Naive thymus-derived CD4-positive, alpha-beta T cell (primary cell): ENCODE measurements at regions of chr2 and their contacts with region 1.

Region 1: DNA sequence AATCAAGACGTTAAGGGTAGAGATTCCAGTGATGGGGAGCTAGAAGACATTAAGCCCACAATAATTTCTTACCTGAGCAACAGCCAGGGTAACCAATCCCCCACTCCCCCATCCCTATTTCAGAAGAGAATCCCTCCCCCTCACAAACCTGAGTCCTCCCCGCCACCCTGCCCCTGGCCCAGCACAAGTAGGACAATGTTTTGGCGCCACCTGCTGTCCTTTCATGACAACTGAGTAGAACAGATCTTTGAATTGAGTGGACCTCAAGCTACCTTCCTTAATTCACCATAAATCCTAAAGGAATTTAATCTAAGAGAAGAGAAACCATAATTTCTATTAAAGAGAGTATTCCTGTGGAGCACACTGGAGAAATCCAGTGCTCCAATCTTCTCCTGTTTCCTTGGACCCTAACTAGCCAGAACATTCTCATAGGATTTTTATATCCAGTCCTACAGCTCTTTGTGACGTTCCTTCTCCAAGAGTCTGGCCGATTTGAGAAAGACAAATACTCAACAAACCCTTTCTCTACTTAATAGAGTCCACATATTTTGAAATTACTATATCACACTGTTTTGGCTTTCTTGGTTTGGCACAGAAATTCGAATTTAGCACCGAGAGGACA is 41.1 kb downstream of the NHEJ1 start:
- DNase-seq: peak; percentile 14 to 50 (median 34)
- ATAC-seq: peak; percentile 66
- H3K4me3 ChIP-seq: no peak overlapping the region
- H3K4me3 Mint-ChIP-seq: no peak overlapping the region
- H3K27ac ChIP-seq: no peak overlapping the region
- H3K27ac Mint-ChIP-seq: no peak overlapping the region
- H3K4me1 ChIP-seq: peaks cover 0 to 7% of the 10 kb centered on the region in 2 donors
- H3K4me1 Mint-ChIP-seq: peaks cover 4 to 22% (median 11%) of the 10 kb centered on the region in 7 donors
- H3K27me3 ChIP-seq: no peaks in the 10 kb centered on the region
- H3K27me3 Mint-ChIP-seq: no peaks in the 10 kb centered on the region

Region 2: GRCh38 chr2:218648088-218648786 is 471.3 kb before region 1 on chr2:
- CTCF ChIA-PET with region 1: no interaction called
- POLR2A ChIA-PET with region 1: no interaction called
- intact Hi-C with region 1: no loop called
- DNase-seq: peak; percentile 15 to 55 (median 46)
- ATAC-seq: peak; percentile 91
- H3K4me3 ChIP-seq: no peak overlapping the region
- H3K4me3 Mint-ChIP-seq: peak overlapping the region in 1 of 10 donors; percentile 7
- H3K27ac ChIP-seq: no peak overlapping the region
- H3K27ac Mint-ChIP-seq: peak overlapping the region in 1 of 9 donors; percentile 35
- H3K4me1 ChIP-seq: peaks cover 0 to 7% of the 10 kb centered on the region in 2 donors
- H3K4me1 Mint-ChIP-seq: peaks cover 0 to 14% (median 12%) of the 10 kb centered on the region in 7 donors
- H3K27me3 ChIP-seq: no peaks in the 10 kb centered on the region
- H3K27me3 Mint-ChIP-seq: no peaks in the 10 kb centered on the region

Region 3: DNA sequence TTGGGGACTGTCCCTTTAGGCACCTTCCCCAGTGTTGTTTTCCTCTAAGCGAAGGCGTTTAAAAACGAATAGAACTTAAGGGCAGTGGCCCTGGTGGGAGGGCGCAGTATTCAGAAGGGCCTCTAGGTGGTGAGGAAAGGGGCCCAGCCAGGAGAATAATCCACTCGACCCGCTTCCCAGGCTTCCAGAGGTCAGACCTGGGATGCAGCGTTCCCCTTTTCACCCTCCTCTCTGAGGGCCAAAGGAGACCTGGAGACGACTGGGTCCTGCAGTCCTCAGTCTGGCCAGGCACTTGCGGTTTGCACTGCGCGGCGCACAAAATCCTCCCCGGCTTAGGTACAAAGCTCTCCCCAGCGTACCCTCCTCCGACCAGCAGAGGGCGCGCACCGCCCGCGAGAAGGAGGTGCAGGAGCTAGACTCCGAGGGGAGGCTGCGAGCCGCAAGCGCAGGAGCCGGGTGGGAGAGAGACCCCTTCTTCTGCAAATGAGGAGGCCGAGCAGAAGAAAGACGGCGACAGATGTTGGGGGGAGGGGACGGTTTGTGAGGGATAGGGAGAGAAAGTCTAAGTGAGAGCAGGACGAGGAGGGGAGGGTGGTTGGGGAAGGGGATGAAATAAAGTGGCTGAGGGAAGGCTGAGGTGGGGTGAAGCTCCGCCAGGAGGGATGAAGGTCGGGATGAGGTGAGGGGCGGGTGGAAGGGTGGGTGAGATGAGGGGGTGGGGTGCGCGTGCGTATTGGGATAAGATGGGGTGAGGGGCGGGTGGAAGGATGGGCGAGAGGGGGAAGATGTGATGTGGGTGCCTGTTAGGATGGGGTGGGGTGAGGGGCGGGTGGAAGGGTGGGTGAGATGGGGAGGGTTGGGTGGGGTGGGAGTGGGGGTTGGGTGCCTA is 139.4 kb before region 1 on chr2:
- CTCF ChIA-PET with region 1: interaction called, 3 read pairs
- POLR2A ChIA-PET with region 1: no interaction called
- intact Hi-C with region 1: loop called in 1 of 2 experiments (anchors 1 kb)
- DNase-seq: peak; percentile 65 to 85 (median 81)
- ATAC-seq: peak; percentile 93
- H3K4me3 ChIP-seq: peak overlapping the region; percentile 53
- H3K4me3 Mint-ChIP-seq: peak overlapping the region; percentile 66 to 94 (median 73)
- H3K27ac ChIP-seq: no peak overlapping the region
- H3K27ac Mint-ChIP-seq: peak overlapping the region in 1 of 9 donors; percentile 58
- H3K4me1 ChIP-seq: peaks cover 13 to 23% of the 10 kb centered on the region in 2 donors
- H3K4me1 Mint-ChIP-seq: peaks cover 14 to 40% (median 20%) of the 10 kb centered on the region in 7 donors
- H3K27me3 ChIP-seq: peaks cover 17 to 35% of the 10 kb centered on the region in 2 donors
- H3K27me3 Mint-ChIP-seq: peaks cover 60 to 80% (median 70%) of the 10 kb centered on the region in 5 donors

Region 4: DNA sequence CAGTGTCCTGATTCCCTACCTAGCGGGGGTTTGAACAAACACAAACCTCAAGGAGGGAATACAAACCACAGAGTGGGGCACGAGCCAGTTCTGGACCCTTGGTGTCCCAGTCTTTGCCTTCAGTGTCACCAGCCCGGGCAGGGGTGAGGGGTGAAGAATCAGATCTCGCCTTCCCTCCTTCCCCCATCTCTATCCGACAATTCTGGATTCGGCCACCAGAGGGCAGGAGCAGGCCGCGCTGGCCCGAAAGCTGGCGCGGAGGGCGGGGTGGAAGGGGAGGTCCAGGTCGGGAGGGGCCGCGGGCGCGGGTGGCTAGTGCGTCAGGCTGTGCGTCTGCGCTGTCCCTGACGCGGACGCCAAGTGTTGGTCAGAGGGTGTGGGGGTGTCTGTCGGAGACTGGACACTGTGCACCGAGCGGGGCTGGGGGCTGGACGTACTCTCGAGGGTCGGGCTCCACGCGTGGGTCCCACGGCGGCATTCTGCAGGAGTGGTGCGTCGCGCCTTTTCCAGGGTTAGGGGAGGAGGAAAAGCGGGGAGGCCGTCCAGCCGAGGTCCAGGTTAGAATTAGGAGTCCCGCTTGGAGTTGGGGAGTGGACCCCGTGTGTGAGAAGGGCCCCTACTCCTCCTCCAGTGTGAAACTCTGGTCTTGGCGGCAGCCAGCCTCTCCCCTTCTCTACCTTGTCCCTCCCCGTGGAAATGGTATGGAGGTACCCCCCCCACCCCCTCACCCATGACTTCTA is 123.4 kb before region 1 on chr2:
- CTCF ChIA-PET with region 1: interaction called, 3 read pairs
- POLR2A ChIA-PET with region 1: no interaction called
- intact Hi-C with region 1: loop called in 1 of 2 experiments (anchors 1 kb)
- DNase-seq: peak; percentile 38 to 85 (median 63)
- ATAC-seq: peak; percentile 90
- H3K4me3 ChIP-seq: no peak overlapping the region
- H3K4me3 Mint-ChIP-seq: peak overlapping the region in 6 of 10 donors; percentile 29 to 66 (median 45)
- H3K27ac ChIP-seq: no peak overlapping the region
- H3K27ac Mint-ChIP-seq: no peak overlapping the region
- H3K4me1 ChIP-seq: peaks cover 0 to 7% of the 10 kb centered on the region in 2 donors
- H3K4me1 Mint-ChIP-seq: peaks cover 0 to 15% (median 7%) of the 10 kb centered on the region in 7 donors
- H3K27me3 ChIP-seq: peaks cover 5 to 33% of the 10 kb centered on the region in 2 donors
- H3K27me3 Mint-ChIP-seq: peaks cover 57 to 88% (median 64%) of the 10 kb centered on the region in 5 donors

Region 5: DNA sequence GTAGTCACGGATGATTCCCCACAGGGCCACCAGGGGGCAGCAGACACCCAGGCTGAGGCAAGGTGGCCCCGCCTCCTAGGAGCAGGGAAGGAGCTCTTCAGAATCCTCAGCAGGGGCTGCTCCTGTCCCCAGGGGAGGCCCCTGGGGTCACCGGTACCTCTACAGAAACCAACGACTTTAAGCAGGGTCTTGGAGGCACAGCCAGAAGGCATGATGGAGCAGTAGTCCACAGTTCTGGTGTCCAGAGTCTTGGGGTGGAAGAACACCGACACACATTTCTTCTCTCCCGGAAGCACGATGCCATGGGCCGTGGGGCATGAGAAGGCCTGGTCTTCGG is 89.7 kb before region 1 on chr2:
- CTCF ChIA-PET with region 1: interaction called, 6 read pairs
- POLR2A ChIA-PET with region 1: no interaction called
- intact Hi-C with region 1: loop called (anchors 1 kb)
- DNase-seq: peak; percentile 60 to 79 (median 71)
- ATAC-seq: peak; percentile 90
- H3K4me3 ChIP-seq: no peak overlapping the region
- H3K4me3 Mint-ChIP-seq: no peak overlapping the region
- H3K27ac ChIP-seq: no peak overlapping the region
- H3K27ac Mint-ChIP-seq: peak overlapping the region in 1 of 9 donors; percentile 14
- H3K4me1 ChIP-seq: no peaks in the 10 kb centered on the region
- H3K4me1 Mint-ChIP-seq: no peaks in the 10 kb centered on the region
- H3K27me3 ChIP-seq: peaks cover 0 to 3% of the 10 kb centered on the region in 2 donors
- H3K27me3 Mint-ChIP-seq: peaks cover 21 to 41% (median 28%) of the 10 kb centered on the region in 5 donors